Activated naive CD4-positive, alpha-beta T cell treated with anti-CD3 and anti-CD28 coated beads, Interleukin-2, amount 10 ng/mL, durations not matched to agents 7 days and 5 days (primary cell): ENCODE measurements at regions of chr1 and their contacts with region 1.

Region 1: GRCh38 chr1:46223472-46223943 is 20.4 kb downstream of the LURAP1 start:
- DNase-seq: peak; percentile 76
- H3K4me3 Mint-ChIP-seq: no peak overlapping the region
- H3K27ac Mint-ChIP-seq: no peak overlapping the region
- H3K4me1 Mint-ChIP-seq: peaks cover 3% of the 10 kb centered on the region
- H3K27me3 Mint-ChIP-seq: peaks cover 11% of the 10 kb centered on the region

Region 2: GRCh38 chr1:46003315-46003714 is 220.2 kb before region 1 on chr1:
- CTCF ChIA-PET with region 1: no interaction called
- DNase-seq: no peak
- H3K4me3 Mint-ChIP-seq: no peak overlapping the region
- H3K27ac Mint-ChIP-seq: no peak overlapping the region
- H3K4me1 Mint-ChIP-seq: no peaks in the 10 kb centered on the region
- H3K27me3 Mint-ChIP-seq: no peaks in the 10 kb centered on the region

Region 3: GRCh38 chr1:46036894-46037839 is 186.3 kb before region 1 on chr1:
- CTCF ChIA-PET with region 1: interaction called, 42 read pairs
- DNase-seq: peak; percentile 87
- H3K4me3 Mint-ChIP-seq: no peak overlapping the region
- H3K27ac Mint-ChIP-seq: no peak overlapping the region
- H3K4me1 Mint-ChIP-seq: no peaks in the 10 kb centered on the region
- H3K27me3 Mint-ChIP-seq: no peaks in the 10 kb centered on the region

Region 4: DNA sequence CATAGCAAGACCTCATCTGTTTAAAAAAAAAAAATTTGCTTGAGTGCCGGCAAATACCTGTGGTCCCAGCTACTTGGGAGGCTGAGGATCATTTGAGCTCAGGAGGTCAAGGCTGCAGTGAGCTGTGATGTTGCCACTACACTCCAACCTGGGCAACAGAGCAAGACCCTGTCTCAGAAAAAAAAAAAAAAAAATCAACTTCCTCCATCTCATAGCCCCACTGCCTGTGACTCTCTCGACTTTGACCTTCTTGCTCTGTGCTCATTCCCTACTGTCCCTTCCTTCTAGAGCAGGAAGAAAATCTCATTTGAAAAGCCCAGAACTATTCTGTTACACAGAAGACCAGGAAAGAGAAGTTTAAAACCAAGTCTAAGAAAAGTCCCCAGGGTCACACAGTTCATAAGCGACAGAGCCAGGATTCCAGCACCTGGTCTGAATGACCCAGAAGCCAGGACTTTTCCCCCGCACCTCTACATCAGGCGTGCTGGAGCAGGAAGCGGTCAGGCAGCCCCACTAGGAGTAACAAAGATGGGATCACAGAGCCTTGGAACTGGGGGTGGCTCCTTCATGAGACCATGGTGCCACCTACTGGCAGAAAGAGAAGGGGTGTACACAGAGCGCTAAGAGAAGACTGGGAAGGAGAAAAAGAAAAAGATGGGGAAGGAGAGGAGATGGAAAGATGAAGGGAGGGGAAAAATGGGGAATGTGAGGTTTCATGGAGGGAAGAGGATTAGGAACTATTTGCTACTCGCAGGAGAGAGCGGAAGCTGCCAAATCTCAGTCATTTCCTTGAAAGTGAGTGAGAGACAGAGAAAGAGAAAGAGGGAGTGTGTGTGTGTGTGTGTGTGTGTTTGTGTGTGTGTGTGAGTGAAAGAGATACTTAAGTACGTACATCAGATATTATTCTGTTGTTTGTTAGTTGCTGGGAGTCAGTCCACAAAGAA is 44.1 kb before region 1 on chr1:
- CTCF ChIA-PET with region 1: interaction called, 18 read pairs
- DNase-seq: peak; percentile 78
- H3K4me3 Mint-ChIP-seq: no peak overlapping the region
- H3K27ac Mint-ChIP-seq: no peak overlapping the region
- H3K4me1 Mint-ChIP-seq: peaks cover 7% of the 10 kb centered on the region
- H3K27me3 Mint-ChIP-seq: no peaks in the 10 kb centered on the region

Region 5: GRCh38 chr1:46236882-46237281 is 13.4 kb after region 1 on chr1:
- CTCF ChIA-PET with region 1: interaction called, 15 read pairs
- DNase-seq: no peak
- H3K4me3 Mint-ChIP-seq: no peak overlapping the region
- H3K27ac Mint-ChIP-seq: no peak overlapping the region
- H3K4me1 Mint-ChIP-seq: peaks cover 3% of the 10 kb centered on the region
- H3K27me3 Mint-ChIP-seq: no peaks in the 10 kb centered on the region

Region 6: GRCh38 chr1:46247436-46248121 is 24.1 kb after region 1 on chr1 and contains the start of gene RAD54L:
- CTCF ChIA-PET with region 1: interaction called, 14 read pairs
- DNase-seq: peak; percentile 98
- H3K4me3 Mint-ChIP-seq: peak within 1 kb of the TSS; percentile 96
- H3K27ac Mint-ChIP-seq: peak within 1 kb of the TSS; percentile 88
- H3K4me1 Mint-ChIP-seq: peaks cover 47% of the 10 kb centered on the region
- H3K27me3 Mint-ChIP-seq: peaks cover 5% of the 10 kb centered on the region